ENCODE measurements at regions of chr11 and their contacts with region 1.

Region 1: DNA sequence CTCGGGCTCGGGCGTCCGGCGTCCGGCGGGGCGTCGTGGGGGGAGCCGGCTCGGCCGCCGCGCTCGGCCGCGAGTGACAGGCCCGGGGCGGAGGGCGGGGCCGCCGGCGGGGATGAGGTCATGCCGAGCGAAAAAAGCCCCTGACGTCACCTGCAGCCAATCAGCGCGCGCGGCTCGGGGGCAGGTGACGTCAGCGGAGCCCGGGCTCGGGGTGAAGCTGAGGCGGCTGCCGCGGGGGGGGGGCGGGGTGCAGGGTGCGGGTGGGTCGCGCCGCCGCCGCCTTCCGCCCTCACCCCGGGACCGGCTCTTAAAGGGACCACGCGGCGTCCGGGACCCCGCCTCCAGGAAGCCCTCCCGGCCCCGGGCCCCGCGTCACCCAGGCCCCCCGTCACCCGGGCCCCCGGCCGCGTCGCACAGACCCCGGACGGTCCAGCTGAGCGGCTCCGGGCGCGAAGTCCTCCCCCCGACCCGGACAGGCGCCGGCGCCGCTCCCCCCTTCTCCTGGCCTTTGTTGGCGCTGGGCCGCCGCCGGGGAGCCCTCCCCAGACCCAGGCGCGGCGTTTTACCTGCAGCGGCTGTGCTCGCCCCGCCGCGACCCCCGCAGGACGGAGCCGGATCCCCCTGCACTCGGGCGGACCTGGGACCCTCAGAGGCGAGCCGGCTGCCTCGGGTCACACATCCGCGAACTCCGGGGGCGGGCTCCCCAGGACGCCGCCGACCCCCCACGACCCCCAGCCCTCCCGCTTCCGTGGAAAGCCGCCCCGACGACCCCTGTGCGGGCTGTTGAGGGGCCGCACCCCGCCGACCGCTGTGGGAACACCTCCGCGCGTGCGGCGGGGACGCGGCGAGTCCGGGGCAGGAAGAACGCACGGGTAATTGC is at the start of gene DUSP8:
- DNase-seq: peak; percentile 97
- ATAC-seq: peak; percentile 48
- H3K4me3 ChIP-seq: peak within 1 kb of the TSS in 4 of 5 experiments; percentile 40 to 75 (median 64)
- H3K4me3 Mint-ChIP-seq: peak within 1 kb of the TSS; percentile 84
- H3K27ac ChIP-seq: peak within 1 kb of the TSS; percentile 85
- H3K27ac Mint-ChIP-seq: peak within 1 kb of the TSS; percentile 70
- H3K4me1 ChIP-seq: peaks cover 31 to 33% of the 10 kb centered on the region in 2 donors
- H3K4me1 Mint-ChIP-seq: peaks cover 20% of the 10 kb centered on the region
- H3K27me3 ChIP-seq: peaks cover 0 to 32% (median 9%) of the 10 kb centered on the region in 4 experiments
- H3K27me3 Mint-ChIP-seq: peaks cover 10% of the 10 kb centered on the region
- CTCF ChIP-seq: no peak
- total RNA-seq, gene DUSP8: 4.3 and 5.2 TPM in 2 replicates

Region 2: DNA sequence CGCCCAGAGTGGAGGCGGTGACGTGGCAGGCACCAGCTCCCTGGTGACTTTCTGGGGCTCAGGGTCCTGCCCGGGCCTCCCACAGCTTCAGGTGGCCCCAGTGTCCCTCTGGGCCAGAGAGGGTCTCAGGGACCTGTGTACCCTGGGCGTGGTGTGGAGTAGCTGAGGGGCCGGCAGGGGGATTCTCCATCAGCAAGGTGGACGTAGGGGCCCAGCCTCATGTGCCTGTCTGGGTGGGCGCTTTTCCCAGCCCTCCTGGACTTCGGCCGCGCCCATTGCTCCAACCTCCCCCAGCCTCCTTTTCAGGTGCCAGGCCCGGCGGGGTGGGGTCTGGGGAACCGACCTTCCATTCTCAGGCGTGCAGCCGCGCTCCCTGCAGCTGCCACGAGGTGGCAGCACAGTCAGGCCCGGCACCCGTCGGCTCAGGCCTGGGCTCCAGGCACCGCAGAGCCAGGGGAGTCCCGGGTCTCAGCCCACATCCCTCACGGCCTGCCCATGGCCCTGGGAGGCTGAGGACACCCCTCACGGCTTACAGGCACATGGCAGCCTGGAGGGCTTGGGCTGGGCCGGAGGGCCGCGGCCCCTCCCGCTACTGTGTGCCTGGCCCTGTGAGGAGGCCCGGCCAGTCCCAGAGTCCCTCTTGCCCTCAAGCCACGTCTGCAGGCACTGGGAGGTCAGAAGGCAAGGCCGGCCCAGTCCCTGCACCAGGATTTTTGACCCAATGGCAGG is 369.5 kb before region 1 on chr11:
- CTCF ChIA-PET with region 1: interaction called, 57 read pairs
- POLR2A ChIA-PET with region 1: no interaction called
- intact Hi-C with region 1: no loop called
- DNase-seq: peak; percentile 77
- ATAC-seq: peak; percentile 90
- H3K4me3 ChIP-seq: no peak overlapping the region
- H3K4me3 Mint-ChIP-seq: no peak overlapping the region
- H3K27ac ChIP-seq: no peak overlapping the region
- H3K27ac Mint-ChIP-seq: no peak overlapping the region
- H3K4me1 ChIP-seq: peaks cover 0 to 6% of the 10 kb centered on the region in 2 donors
- H3K4me1 Mint-ChIP-seq: no peaks in the 10 kb centered on the region
- H3K27me3 ChIP-seq: peaks cover 0 to 13% (median 0%) of the 10 kb centered on the region in 4 experiments
- H3K27me3 Mint-ChIP-seq: no peaks in the 10 kb centered on the region
- CTCF ChIP-seq: peak; percentile 86

Region 3: DNA sequence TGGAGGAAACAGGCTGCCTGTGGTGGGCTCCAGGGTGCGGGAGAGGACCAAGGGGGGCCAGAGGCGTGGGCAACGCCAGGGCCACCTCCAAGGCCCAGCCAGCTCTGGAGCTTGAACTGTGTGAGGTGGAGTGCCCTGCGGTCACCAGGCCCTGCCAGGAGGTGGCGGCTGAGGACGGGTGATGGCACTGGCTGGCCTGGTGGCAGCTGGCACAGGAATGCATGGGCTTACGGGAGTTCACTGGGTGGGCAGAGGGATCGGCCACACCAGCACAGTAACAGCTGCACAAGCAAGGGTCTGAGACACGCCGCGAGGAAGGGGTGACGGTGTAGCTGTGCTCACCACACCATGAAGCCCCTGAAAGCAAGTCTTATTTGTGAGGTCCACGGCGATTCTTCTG is 278.8 kb before region 1 on chr11:
- CTCF ChIA-PET with region 1: interaction called, 12 read pairs
- POLR2A ChIA-PET with region 1: no interaction called
- intact Hi-C with region 1: no loop called
- DNase-seq: peak; percentile 40
- ATAC-seq: peak; percentile 39
- H3K4me3 ChIP-seq: no peak overlapping the region
- H3K4me3 Mint-ChIP-seq: no peak overlapping the region
- H3K27ac ChIP-seq: no peak overlapping the region
- H3K27ac Mint-ChIP-seq: no peak overlapping the region
- H3K4me1 ChIP-seq: no peaks in the 10 kb centered on the region
- H3K4me1 Mint-ChIP-seq: no peaks in the 10 kb centered on the region
- H3K27me3 ChIP-seq: no peaks in the 10 kb centered on the region
- H3K27me3 Mint-ChIP-seq: no peaks in the 10 kb centered on the region
- CTCF ChIP-seq: no peak

Region 4: GRCh38 chr11:1453611-1454034 is 118.8 kb before region 1 on chr11:
- CTCF ChIA-PET with region 1: interaction called, 7 read pairs
- POLR2A ChIA-PET with region 1: no interaction called
- intact Hi-C with region 1: loop called (anchors 5 kb)
- DNase-seq: peak; percentile 21
- ATAC-seq: peak; percentile 66
- H3K4me3 ChIP-seq: no peak overlapping the region
- H3K4me3 Mint-ChIP-seq: no peak overlapping the region
- H3K27ac ChIP-seq: no peak overlapping the region
- H3K27ac Mint-ChIP-seq: no peak overlapping the region
- H3K4me1 ChIP-seq: peaks cover 0 to 4% of the 10 kb centered on the region in 2 donors
- H3K4me1 Mint-ChIP-seq: no peaks in the 10 kb centered on the region
- H3K27me3 ChIP-seq: no peaks in the 10 kb centered on the region
- H3K27me3 Mint-ChIP-seq: no peaks in the 10 kb centered on the region
- CTCF ChIP-seq: peak; percentile 32

Region 5: DNA sequence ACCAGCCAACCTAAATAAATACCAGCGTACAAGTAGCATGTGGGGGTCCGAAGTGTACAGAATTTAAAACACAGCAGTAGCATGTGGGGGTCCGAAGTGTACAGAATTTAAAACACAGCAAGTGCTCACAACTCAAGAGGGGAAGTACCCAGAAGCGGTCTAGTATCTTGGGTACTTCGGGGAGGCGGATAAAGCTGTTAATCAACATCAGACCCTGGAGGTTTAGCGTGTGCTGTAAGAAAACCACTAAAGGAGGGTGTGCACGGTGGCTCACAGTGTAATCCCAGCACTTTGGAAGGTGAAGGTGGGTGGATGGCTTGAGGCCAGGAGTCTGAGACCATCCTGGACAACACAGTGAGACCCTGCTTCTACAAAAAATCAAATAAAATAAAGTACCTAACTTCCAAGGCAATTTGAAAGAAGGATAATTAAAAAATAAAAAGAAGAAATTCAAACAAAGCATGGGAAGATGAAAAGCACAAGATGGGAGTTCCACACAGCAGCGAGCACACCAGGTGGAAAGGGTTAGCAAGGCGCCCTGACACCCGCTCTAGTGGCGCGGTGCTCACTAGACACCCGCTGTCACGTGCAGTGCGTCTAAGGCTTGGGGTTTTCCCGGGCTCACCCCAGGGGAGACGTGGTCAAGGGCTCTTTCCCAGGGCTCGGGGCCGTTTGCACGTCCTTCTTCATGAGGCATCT is 50.9 kb before region 1 on chr11:
- CTCF ChIA-PET with region 1: interaction called, 19 read pairs
- POLR2A ChIA-PET with region 1: interaction called, 3 read pairs
- intact Hi-C with region 1: loop called (anchors 1 kb)
- DNase-seq: peak; percentile 89
- ATAC-seq: peak; percentile 93
- H3K4me3 ChIP-seq: peak overlapping the region in 3 of 5 experiments; percentile 11 to 34 (median 15)
- H3K4me3 Mint-ChIP-seq: peak overlapping the region; percentile 81
- H3K27ac ChIP-seq: peak overlapping the region; percentile 19 to 73
- H3K27ac Mint-ChIP-seq: peak overlapping the region; percentile 73
- H3K4me1 ChIP-seq: peaks cover 31 to 39% of the 10 kb centered on the region in 2 donors
- H3K4me1 Mint-ChIP-seq: peaks cover 61% of the 10 kb centered on the region
- H3K27me3 ChIP-seq: no peaks in the 10 kb centered on the region
- H3K27me3 Mint-ChIP-seq: no peaks in the 10 kb centered on the region
- CTCF ChIP-seq: no peak

Region 6: GRCh38 chr11:1546536-1547400 is 25.7 kb before region 1 on chr11:
- CTCF ChIA-PET with region 1: interaction called, 60 read pairs
- POLR2A ChIA-PET with region 1: interaction called, 9 read pairs
- intact Hi-C with region 1: loop called (anchors 1 kb)
- DNase-seq: peak; percentile 74
- ATAC-seq: peak; percentile 63
- H3K4me3 ChIP-seq: peak overlapping the region in 3 of 5 experiments; percentile 36 to 59 (median 47)
- H3K4me3 Mint-ChIP-seq: peak overlapping the region; percentile 59
- H3K27ac ChIP-seq: no peak overlapping the region
- H3K27ac Mint-ChIP-seq: no peak overlapping the region
- H3K4me1 ChIP-seq: peaks cover 23 to 27% of the 10 kb centered on the region in 2 donors
- H3K4me1 Mint-ChIP-seq: peaks cover 16% of the 10 kb centered on the region
- H3K27me3 ChIP-seq: peaks cover 0 to 58% (median 17%) of the 10 kb centered on the region in 4 experiments
- H3K27me3 Mint-ChIP-seq: peaks cover 12% of the 10 kb centered on the region
- CTCF ChIP-seq: peak; percentile 77

Region 7: DNA sequence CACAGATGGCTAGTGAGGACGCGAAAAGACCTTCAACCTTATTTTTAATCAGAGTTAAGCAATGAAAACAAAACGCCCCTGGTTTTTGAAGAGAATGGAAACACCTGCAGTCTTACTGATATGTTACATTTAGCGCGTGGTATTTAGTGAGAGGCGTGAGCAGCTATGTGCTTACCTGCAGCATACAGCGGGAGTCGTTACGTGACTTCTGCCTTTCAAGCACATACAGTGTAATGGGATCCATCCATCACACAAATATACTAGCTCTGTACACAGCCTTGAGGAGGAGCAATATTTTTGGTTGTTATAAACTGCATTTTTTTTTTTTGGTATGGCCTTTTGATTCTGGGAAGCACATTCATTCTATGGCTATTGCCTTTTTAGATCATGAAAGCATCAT is 20.2 kb after region 1 on chr11:
- CTCF ChIA-PET with region 1: interaction called, 18 read pairs
- POLR2A ChIA-PET with region 1: interaction called, 7 read pairs
- intact Hi-C with region 1: no loop called
- DNase-seq: no peak
- ATAC-seq: no peak
- H3K4me3 ChIP-seq: no peak overlapping the region
- H3K4me3 Mint-ChIP-seq: no peak overlapping the region
- H3K27ac ChIP-seq: no peak overlapping the region
- H3K27ac Mint-ChIP-seq: no peak overlapping the region
- H3K4me1 ChIP-seq: peaks cover 8 to 22% of the 10 kb centered on the region in 2 donors
- H3K4me1 Mint-ChIP-seq: peaks cover 21% of the 10 kb centered on the region
- H3K27me3 ChIP-seq: peaks cover 0 to 21% (median 3%) of the 10 kb centered on the region in 4 experiments
- H3K27me3 Mint-ChIP-seq: peaks cover 38% of the 10 kb centered on the region
- CTCF ChIP-seq: no peak

Region 8: DNA sequence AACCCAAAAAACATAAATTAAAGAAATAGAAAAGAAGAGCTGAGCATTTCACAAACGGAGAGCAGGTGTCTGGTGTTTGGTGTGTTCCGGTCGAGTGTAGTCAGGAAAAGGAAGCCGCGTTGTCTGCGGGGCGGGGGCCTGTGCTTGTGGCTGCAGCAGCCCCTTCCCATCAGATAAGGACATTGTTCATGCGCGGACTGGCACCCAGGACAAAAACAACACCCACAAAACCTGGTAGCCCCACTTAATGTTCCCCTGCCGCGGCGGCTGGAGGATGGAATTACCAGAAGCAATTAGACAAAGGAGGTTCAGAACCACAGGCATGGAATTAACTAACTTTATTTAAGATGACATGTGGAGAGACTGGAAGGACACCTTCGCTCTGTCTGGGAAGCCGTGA is 87.1 kb after region 1 on chr11:
- CTCF ChIA-PET with region 1: no interaction called
- POLR2A ChIA-PET with region 1: no interaction called
- intact Hi-C with region 1: no loop called
- DNase-seq: no peak
- ATAC-seq: no peak
- H3K4me3 ChIP-seq: no peak overlapping the region
- H3K4me3 Mint-ChIP-seq: no peak overlapping the region
- H3K27ac ChIP-seq: no peak overlapping the region
- H3K27ac Mint-ChIP-seq: no peak overlapping the region
- H3K4me1 ChIP-seq: peaks cover 0 to 4% of the 10 kb centered on the region in 2 donors
- H3K4me1 Mint-ChIP-seq: no peaks in the 10 kb centered on the region
- H3K27me3 ChIP-seq: peaks cover 0 to 22% (median 0%) of the 10 kb centered on the region in 4 experiments
- H3K27me3 Mint-ChIP-seq: peaks cover 41% of the 10 kb centered on the region
- CTCF ChIP-seq: no peak